ENCODE measurements at regions of chr6 and their contacts with region 1.

Region 1: DNA sequence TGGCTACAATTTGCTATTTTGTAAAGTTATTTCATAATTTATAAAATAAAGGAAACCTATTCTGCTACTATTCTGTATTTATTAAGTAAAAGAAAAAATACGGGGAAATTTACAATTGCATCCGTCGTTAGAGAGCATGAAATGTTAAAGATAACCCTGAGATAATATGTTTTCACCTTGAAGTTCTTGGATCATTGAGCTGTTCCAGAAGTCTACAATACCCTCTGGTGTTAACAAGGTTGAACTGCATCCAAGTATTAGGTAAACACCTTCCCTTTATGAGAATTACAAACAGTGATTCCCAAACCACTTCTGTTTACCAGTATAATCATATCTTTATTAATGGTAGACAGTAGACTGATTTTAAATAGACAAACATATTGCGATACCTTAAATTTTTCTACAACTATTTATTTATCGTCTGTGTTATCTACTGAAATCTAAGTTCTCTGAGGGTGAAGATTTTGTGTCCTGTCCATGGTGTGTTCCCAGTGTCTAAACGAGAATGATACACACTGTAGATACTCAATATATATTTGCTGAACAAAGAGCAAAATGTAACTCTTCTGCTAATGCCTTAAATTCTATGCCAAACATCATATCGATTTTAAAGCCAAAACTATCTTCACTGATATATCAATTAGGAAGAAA is 28.2 kb downstream of the TBC1D32 start:
- DNase-seq: peak; percentile 21
- CTCF ChIP-seq: peak; percentile 60

Region 2: GRCh38 chr6:121055572-121056163 is 250.4 kb before region 1 on chr6:
- in situ Hi-C with region 1: loop called (anchors 10 kb)
- DNase-seq: peak; percentile 34
- CTCF ChIP-seq: peak; percentile 69

Measured in GM13977 (cell line).